Activated CD4-positive, alpha-beta T cell treated with anti-CD3 and anti-CD28 coated beads for 36 hours (primary cell): ENCODE measurements at regions of chr17 and their contacts with region 1.

Region 1: GRCh38 chr17:61412143-61412859 is 12.7 kb downstream of the TBX2 start:
- DNase-seq: peak; percentile 84
- ATAC-seq: peak; percentile 70
- H3K4me3 Mint-ChIP-seq: peak overlapping the region; percentile 49
- H3K27ac Mint-ChIP-seq: no peak overlapping the region
- H3K4me1 Mint-ChIP-seq: peaks cover 14% of the 10 kb centered on the region
- H3K27me3 Mint-ChIP-seq: peaks cover 31% of the 10 kb centered on the region

Region 2: DNA sequence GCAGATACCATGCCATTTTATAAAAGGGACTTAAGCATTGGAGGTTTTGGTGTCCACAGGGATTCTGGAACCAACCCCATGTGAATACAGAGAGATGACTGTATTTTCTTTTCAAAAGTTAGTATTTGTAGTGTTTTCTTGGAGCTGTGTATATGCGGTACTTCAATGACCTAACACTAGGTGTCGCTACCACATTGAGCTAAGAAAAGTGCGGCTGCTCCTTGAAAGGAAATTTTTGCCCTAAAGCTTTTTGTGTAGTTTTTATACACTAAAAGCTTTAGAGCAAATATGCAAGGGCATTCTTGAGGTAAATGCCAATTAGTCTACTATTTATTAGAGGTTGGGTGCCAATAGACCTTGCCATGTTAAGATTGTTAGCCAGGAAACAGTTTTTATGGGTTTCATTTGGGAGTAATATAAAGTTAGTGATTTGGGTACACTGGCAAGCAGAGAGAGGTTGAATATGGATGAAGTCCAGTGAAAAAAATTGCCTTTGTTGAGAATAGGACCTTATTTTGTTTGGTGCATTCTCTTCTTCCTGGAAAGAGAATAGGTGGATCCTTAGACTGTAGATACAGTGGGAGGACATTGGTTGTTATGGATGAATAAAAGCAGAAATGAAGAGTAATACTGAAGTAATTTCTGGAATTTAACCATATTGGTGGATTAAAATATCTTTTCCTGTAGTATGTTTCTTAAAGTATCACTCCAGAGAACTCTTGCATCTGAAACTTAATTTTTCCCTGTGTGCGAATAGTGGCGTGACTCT is 691.4 kb before region 1 on chr17:
- CTCF ChIA-PET with region 1: interaction called, 10 read pairs
- POLR2A ChIA-PET with region 1: no interaction called
- intact Hi-C with region 1: loop called in 1 of 2 experiments (anchors 2 kb)
- DNase-seq: peak; percentile 56
- ATAC-seq: no peak
- H3K4me3 Mint-ChIP-seq: no peak overlapping the region
- H3K27ac Mint-ChIP-seq: no peak overlapping the region
- H3K4me1 Mint-ChIP-seq: peaks cover 3% of the 10 kb centered on the region
- H3K27me3 Mint-ChIP-seq: no peaks in the 10 kb centered on the region

Region 3: DNA sequence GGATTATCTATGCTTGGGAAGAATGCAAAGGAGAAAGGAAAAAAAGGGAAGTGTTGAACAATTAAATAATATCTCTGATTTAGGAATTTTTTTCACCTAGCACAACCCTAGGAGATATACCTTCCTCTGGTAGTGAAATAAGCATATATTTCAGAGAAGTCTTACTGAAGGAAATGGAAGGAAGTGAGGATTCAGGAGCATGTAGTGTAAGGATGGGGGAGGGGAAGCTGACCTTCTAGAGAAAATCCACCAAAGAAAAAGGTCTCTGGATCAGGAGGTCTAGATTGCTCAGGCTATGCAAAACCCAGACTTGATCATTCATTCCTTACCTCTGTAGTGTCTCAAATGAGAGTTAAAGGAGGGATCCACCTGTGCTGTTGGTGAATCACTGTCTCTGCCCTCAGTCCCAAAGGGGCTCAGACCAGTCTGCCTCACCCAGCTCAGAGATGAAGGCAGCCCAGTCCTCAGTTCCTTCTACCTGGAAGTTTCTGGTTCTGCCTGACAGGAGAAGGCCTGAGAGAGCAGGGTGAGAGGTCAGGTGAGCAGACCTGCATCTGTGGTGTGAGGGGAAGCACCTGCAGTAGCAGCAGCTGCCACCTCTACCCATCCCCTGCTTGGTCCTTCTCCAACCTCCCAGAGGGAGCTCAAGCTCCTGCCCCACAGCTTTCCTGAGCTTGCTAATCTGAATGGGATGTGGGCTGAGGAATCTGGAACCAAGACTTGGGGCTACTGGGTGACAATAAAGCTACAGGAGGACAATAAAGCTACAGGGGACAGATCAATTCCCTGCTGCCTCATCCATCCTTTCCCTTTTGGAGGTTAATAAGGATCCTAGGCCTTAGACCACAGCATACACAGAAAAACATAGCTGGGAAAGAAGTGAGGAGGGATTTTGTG is 34.8 kb after region 1 on chr17:
- CTCF ChIA-PET with region 1: interaction called, 12 read pairs
- POLR2A ChIA-PET with region 1: no interaction called
- intact Hi-C with region 1: no loop called
- DNase-seq: no peak
- ATAC-seq: no peak
- H3K4me3 Mint-ChIP-seq: no peak overlapping the region
- H3K27ac Mint-ChIP-seq: no peak overlapping the region
- H3K4me1 Mint-ChIP-seq: no peaks in the 10 kb centered on the region
- H3K27me3 Mint-ChIP-seq: peaks cover 38% of the 10 kb centered on the region

Region 4: DNA sequence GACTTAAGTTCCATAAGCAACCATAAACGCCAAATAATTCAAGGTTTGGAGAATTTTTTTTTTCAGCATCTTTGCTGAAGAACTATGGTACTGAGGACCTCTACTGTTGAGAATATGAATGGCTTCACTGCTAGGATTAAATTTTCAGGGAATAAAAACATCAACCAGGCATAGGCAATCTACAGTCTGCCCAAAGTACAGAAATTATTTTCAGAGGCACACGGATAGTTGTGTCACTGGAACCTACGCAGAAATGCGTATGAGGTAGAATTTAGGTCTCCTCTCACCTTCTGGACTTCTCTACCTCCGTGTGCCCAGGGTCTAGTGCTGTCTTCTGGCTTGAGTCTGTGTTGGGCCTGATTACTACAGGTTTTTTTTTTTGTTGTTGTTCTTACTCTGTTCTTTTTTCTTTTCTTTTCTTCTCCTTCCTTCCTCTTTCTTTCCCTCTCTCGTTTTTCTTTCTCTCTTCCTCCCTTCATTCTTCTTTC is 139.0 kb after region 1 on chr17:
- CTCF ChIA-PET with region 1: interaction called, 6 read pairs
- POLR2A ChIA-PET with region 1: no interaction called
- intact Hi-C with region 1: loop called (anchors 1 kb)
- DNase-seq: no peak
- ATAC-seq: no peak
- H3K4me3 Mint-ChIP-seq: no peak overlapping the region
- H3K27ac Mint-ChIP-seq: no peak overlapping the region
- H3K4me1 Mint-ChIP-seq: no peaks in the 10 kb centered on the region
- H3K27me3 Mint-ChIP-seq: peaks cover 40% of the 10 kb centered on the region

Region 5: GRCh38 chr17:61583242-61583641 is 170.9 kb after region 1 on chr17:
- CTCF ChIA-PET with region 1: interaction called, 8 read pairs
- POLR2A ChIA-PET with region 1: no interaction called
- intact Hi-C with region 1: loop called in 1 of 2 experiments (anchors 2 kb)
- DNase-seq: no peak
- ATAC-seq: no peak
- H3K4me3 Mint-ChIP-seq: no peak overlapping the region
- H3K27ac Mint-ChIP-seq: no peak overlapping the region
- H3K4me1 Mint-ChIP-seq: no peaks in the 10 kb centered on the region
- H3K27me3 Mint-ChIP-seq: peaks cover 16% of the 10 kb centered on the region

Region 6: DNA sequence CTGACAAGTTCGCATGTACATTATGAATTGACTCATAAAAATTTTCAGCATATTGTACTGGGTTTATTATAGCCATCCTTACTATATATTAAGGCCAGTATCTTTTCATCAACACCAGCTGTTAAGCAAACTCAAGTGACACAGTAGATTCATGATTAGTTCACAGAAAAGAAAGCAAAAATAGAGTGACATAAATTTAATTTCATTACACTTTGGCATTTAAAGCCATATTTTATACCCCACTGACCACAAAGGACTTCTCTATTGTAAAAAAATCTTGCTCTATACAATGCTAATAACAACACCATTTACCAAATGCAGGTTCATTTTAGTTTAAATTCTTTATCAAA is 199.3 kb after region 1 on chr17:
- CTCF ChIA-PET with region 1: no interaction called
- POLR2A ChIA-PET with region 1: no interaction called
- intact Hi-C with region 1: no loop called
- DNase-seq: no peak
- ATAC-seq: no peak
- H3K4me3 Mint-ChIP-seq: no peak overlapping the region
- H3K27ac Mint-ChIP-seq: no peak overlapping the region
- H3K4me1 Mint-ChIP-seq: peaks cover 3% of the 10 kb centered on the region
- H3K27me3 Mint-ChIP-seq: no peaks in the 10 kb centered on the region

Region 7: GRCh38 chr17:61837175-61838051 is 425.1 kb after region 1 on chr17:
- CTCF ChIA-PET with region 1: no interaction called
- POLR2A ChIA-PET with region 1: no interaction called
- intact Hi-C with region 1: loop called (anchors 1 to 2 kb)
- DNase-seq: peak; percentile 72
- ATAC-seq: no peak
- H3K4me3 Mint-ChIP-seq: no peak overlapping the region
- H3K27ac Mint-ChIP-seq: no peak overlapping the region
- H3K4me1 Mint-ChIP-seq: no peaks in the 10 kb centered on the region
- H3K27me3 Mint-ChIP-seq: no peaks in the 10 kb centered on the region

Region 8: DNA sequence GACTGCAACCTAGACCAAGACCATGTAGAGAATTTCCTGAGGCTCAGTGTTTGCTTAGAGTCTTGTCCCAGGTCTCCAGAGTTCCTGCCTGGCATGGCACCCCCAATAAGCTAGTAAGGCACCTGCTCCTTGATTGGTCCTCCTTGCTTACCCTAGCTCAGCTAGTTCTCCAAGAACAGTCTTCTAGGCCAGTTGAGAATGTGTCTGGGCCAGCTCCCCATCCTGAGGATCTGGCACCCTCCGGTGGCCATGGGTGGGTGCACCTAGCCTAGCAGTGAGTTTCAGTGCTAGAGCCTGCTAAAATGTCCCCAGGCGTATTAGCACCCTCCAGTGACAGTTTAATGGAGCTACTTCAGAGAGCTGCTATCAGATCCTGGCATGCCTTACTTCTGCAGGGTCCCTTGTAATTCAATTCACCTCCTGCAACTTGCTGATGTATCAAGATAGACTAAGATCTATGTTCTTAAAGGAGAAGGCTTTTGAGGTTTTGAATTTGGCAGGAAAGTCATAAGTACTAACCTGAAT is 697.1 kb after region 1 on chr17:
- CTCF ChIA-PET with region 1: no interaction called
- POLR2A ChIA-PET with region 1: no interaction called
- intact Hi-C with region 1: loop called in 1 of 2 experiments (anchors 2 kb)
- DNase-seq: peak; percentile 84
- ATAC-seq: peak; percentile 100
- H3K4me3 Mint-ChIP-seq: no peak overlapping the region
- H3K27ac Mint-ChIP-seq: no peak overlapping the region
- H3K4me1 Mint-ChIP-seq: no peaks in the 10 kb centered on the region
- H3K27me3 Mint-ChIP-seq: no peaks in the 10 kb centered on the region